ENCODE measurements at regions of chr5 and their contacts with region 1.

Region 1: GRCh38 chr5:154610321-154611154 is 132.5 kb upstream of the HAND1 start:
- DNase-seq: peak; percentile 83 to 89 (median 86)
- ATAC-seq: peak; percentile 98
- H3K4me3 ChIP-seq: no peak overlapping the region
- H3K27ac ChIP-seq: no peak overlapping the region
- H3K4me1 ChIP-seq: peaks cover 0 to 18% of the 10 kb centered on the region in 2 experiments; a peak in 2 of 5 replicates
- H3K27me3 ChIP-seq: peaks cover 30 to 59% of the 10 kb centered on the region in 2 experiments
- CTCF ChIP-seq: peak; percentile 92 to 97 (median 96)
- EP300 ChIP-seq: no peak
- POLR2A ChIP-seq: no peak
- RAD21 ChIP-seq: peak; percentile 92 to 96

Region 2: GRCh38 chr5:153974131-153974812 is 636.3 kb before region 1 on chr5:
- CTCF ChIA-PET with region 1: interaction called, 4 read pairs
- POLR2A ChIA-PET with region 1: no interaction called
- in situ Hi-C with region 1: loop called (anchors 10 kb)
- intact Hi-C with region 1: loop called (anchors 2 kb)
- DNase-seq: peak; percentile 38 to 60 (median 48)
- ATAC-seq: peak; percentile 78
- H3K4me3 ChIP-seq: no peak overlapping the region
- H3K27ac ChIP-seq: no peak overlapping the region
- H3K4me1 ChIP-seq: peaks cover 0 to 27% of the 10 kb centered on the region in 2 experiments; a peak in 3 of 5 replicates
- H3K27me3 ChIP-seq: peaks cover 1 to 3% of the 10 kb centered on the region in 2 experiments; a peak in 2 of 5 replicates
- CTCF ChIP-seq: peak; percentile 62 to 92 (median 76)
- EP300 ChIP-seq: no peak
- POLR2A ChIP-seq: no peak
- RAD21 ChIP-seq: peak; percentile 85 to 90

Region 3: DNA sequence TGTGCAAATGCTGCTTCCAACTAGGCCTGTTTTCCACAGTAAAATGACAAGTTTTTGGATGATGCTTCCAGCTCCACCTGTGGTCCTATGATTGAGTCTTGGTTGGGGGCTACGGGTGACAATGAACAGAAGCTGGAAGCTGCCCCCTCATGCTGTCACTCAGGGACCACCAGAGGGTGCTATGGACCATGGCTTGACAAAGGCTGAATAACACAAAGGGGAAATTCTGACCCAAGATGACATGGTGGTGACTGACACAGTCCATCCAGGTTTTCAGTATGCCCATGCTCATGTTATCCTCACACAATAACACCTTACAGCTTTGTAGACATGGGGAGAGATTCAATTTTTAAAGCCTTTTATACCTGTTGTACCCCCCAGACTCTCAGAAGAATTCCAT is 188.7 kb before region 1 on chr5:
- CTCF ChIA-PET with region 1: interaction called, 6 read pairs
- POLR2A ChIA-PET with region 1: no interaction called
- in situ Hi-C with region 1: no loop called
- intact Hi-C with region 1: loop called (anchors 1 kb)
- DNase-seq: peak; percentile 45 to 66 (median 56)
- ATAC-seq: peak; percentile 94
- H3K4me3 ChIP-seq: no peak overlapping the region
- H3K27ac ChIP-seq: no peak overlapping the region
- H3K4me1 ChIP-seq: peaks cover 0 to 8% of the 10 kb centered on the region in 2 experiments; a peak in 2 of 5 replicates
- H3K27me3 ChIP-seq: no peaks in the 10 kb centered on the region
- CTCF ChIP-seq: peak; percentile 67 to 80 (median 73)
- EP300 ChIP-seq: no peak
- POLR2A ChIP-seq: no peak
- RAD21 ChIP-seq: peak; percentile 21 to 64; a peak in 2 of 4 replicates

Region 4: DNA sequence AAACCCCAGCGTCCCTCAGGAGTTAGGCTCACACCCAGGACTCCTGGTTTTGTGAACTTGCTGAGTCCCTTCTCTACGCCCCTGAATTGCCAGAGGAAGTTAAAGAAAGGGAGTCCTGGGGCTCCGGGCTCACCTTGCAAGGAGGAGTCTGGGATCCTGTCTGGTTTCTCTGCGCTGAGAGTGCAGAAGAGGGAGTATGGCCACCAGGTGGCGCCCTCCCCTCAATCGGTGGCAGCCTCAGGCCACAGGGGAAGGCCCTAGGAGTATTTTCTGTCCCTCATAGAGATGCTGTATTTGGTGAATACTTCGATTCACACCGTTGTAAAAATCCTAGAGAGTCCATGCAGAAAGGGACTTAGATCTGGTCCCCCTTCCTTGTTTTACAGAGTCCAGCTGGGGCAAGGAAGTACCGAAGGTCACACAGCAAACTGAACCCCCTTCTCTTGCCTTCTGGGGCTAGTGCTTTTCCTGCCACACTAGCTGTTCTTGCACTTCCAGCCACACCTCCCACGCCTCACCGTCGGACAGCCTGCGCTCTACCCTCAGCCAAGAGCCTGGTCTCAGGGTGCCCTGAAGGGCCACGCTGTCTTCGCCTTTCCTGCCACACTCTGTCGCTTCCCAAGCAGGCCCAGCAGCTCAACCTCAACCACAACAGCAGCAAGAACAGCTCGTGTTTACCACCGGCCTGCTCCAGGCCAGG is 142.7 kb before region 1 on chr5:
- CTCF ChIA-PET with region 1: interaction called, 21 read pairs
- POLR2A ChIA-PET with region 1: interaction called, 3 read pairs
- in situ Hi-C with region 1: loop called (anchors 5 kb)
- intact Hi-C with region 1: loop called (anchors 1 kb)
- DNase-seq: peak; percentile 80 to 88 (median 87)
- ATAC-seq: peak; percentile 99
- H3K4me3 ChIP-seq: no peak overlapping the region
- H3K27ac ChIP-seq: no peak overlapping the region
- H3K4me1 ChIP-seq: no peaks in the 10 kb centered on the region
- H3K27me3 ChIP-seq: peaks cover 17% of the 10 kb centered on the region in 2 experiments
- CTCF ChIP-seq: peak; percentile 88 to 91 (median 89)
- EP300 ChIP-seq: no peak
- POLR2A ChIP-seq: no peak
- RAD21 ChIP-seq: peak; percentile 79 to 88

Region 5: DNA sequence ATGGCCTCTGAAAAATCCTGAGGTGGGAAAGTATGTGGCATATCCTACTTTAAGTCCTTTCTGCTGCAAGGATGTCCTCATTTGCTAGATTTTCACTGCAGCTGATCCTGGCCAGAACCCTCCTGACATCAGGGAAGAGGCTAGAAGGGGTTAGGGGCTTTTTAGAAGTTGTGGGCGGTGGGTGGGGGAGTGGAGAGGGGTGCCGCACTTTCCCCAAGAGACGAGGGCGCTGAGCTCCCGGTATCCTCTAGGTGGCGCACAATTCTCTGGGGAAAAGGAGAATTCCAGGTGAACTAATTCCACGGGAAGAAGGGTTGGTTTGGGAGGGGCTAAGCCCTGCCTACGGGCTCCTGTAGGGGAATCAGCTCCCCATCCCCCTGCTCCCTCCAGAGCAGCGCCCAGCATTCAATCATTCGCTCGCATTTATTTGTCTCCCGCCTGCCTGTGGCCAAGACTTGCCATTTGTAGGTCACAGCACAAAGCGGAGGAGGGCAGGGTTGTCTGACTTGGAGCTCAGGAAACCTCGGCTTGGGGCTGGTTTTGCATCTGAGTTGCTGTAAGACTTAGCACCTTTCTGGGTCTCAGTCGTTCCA is 89.6 kb before region 1 on chr5:
- CTCF ChIA-PET with region 1: interaction called, 3 read pairs
- POLR2A ChIA-PET with region 1: no interaction called
- in situ Hi-C with region 1: no loop called
- intact Hi-C with region 1: loop called (anchors 5 kb)
- DNase-seq: peak; percentile 42 to 68 (median 60)
- ATAC-seq: peak; percentile 66
- H3K4me3 ChIP-seq: no peak overlapping the region
- H3K27ac ChIP-seq: no peak overlapping the region
- H3K4me1 ChIP-seq: peaks cover 12 to 27% of the 10 kb centered on the region in 2 experiments; a peak in 4 of 5 replicates
- H3K27me3 ChIP-seq: peaks cover 12 to 37% of the 10 kb centered on the region in 2 experiments; a peak in 4 of 5 replicates
- CTCF ChIP-seq: peak; percentile 63 to 89 (median 68)
- EP300 ChIP-seq: no peak
- POLR2A ChIP-seq: no peak
- RAD21 ChIP-seq: peak in 1 of 2 experiments; percentile 41; a peak in 2 of 4 replicates

Measured in K562 (cell line).